ENCODE measurements at regions of chr22 and their contacts with region 1.

Region 1: GRCh38 chr22:46563381-46564083 is 26.1 kb upstream of the CELSR1 start:
- DNase-seq: no peak
- H3K4me3 ChIP-seq: no peak overlapping the region
- H3K27ac ChIP-seq: peak overlapping the region in 1 of 4 donors; percentile 20
- H3K4me1 ChIP-seq: peaks cover 12 to 14% (median 13%) of the 10 kb centered on the region in 4 donors
- H3K27me3 ChIP-seq: no peaks in the 10 kb centered on the region
- CTCF ChIP-seq: peak; percentile 70 to 73 (median 72)
- EP300 ChIP-seq: no peak
- POLR2A ChIP-seq: no peak

Region 2: GRCh38 chr22:46309526-46310085 is 253.9 kb before region 1 on chr22:
- intact Hi-C with region 1: no loop called
- DNase-seq: no peak
- H3K4me3 ChIP-seq: no peak overlapping the region
- H3K27ac ChIP-seq: no peak overlapping the region
- H3K4me1 ChIP-seq: no peaks in the 10 kb centered on the region
- H3K27me3 ChIP-seq: no peaks in the 10 kb centered on the region
- CTCF ChIP-seq: no peak
- EP300 ChIP-seq: no peak
- POLR2A ChIP-seq: no peak

Region 3: GRCh38 chr22:46604306-46604690 is 40.8 kb after region 1 on chr22:
- intact Hi-C with region 1: no loop called
- DNase-seq: no peak
- H3K4me3 ChIP-seq: no peak overlapping the region
- H3K27ac ChIP-seq: peak overlapping the region in 2 of 4 donors; percentile 30 to 48
- H3K4me1 ChIP-seq: peaks cover 0 to 10% (median 7%) of the 10 kb centered on the region in 4 donors
- H3K27me3 ChIP-seq: no peaks in the 10 kb centered on the region
- CTCF ChIP-seq: no peak
- EP300 ChIP-seq: no peak
- POLR2A ChIP-seq: no peak

Region 4: DNA sequence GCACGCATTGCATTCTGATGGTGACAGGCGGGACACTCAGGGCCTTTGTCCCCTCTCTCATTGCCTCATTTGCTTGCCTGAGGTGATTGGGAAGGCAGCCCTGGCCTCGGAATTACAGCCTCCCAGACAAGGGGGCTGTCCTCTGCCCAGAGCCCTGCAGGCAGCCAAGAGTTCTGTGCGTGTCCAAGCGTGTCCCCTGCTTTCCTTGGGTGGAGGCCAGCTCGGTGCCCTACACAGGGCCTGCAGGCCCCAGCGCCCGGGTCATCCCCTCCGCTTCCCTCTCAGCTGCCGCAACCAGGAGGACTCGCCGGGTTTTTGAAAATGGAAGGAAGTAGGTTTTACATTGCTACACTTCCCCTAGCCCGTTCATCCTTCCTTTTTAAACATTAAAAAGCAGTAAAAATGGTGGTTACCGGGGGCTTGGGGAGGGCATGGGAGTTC is 58.6 kb after region 1 on chr22:
- intact Hi-C with region 1: no loop called
- DNase-seq: no peak
- H3K4me3 ChIP-seq: no peak overlapping the region
- H3K27ac ChIP-seq: peak overlapping the region in 1 of 4 donors; percentile 22
- H3K4me1 ChIP-seq: peaks cover 46 to 59% (median 47%) of the 10 kb centered on the region in 4 donors
- H3K27me3 ChIP-seq: no peaks in the 10 kb centered on the region
- CTCF ChIP-seq: no peak
- EP300 ChIP-seq: no peak
- POLR2A ChIP-seq: no peak

Region 5: GRCh38 chr22:46638601-46639431 is 75.3 kb after region 1 on chr22:
- intact Hi-C with region 1: no loop called
- DNase-seq: no peak
- H3K4me3 ChIP-seq: no peak overlapping the region
- H3K27ac ChIP-seq: no peak overlapping the region
- H3K4me1 ChIP-seq: peaks cover 28 to 56% (median 47%) of the 10 kb centered on the region in 4 donors
- H3K27me3 ChIP-seq: no peaks in the 10 kb centered on the region
- CTCF ChIP-seq: no peak
- EP300 ChIP-seq: no peak
- POLR2A ChIP-seq: no peak

Region 6: GRCh38 chr22:46649141-46650077 is 85.9 kb after region 1 on chr22:
- intact Hi-C with region 1: loop called (anchors 10 kb)
- DNase-seq: no peak
- H3K4me3 ChIP-seq: no peak overlapping the region
- H3K27ac ChIP-seq: peak overlapping the region; percentile 66 to 80 (median 70)
- H3K4me1 ChIP-seq: peaks cover 58 to 82% (median 69%) of the 10 kb centered on the region in 4 donors
- H3K27me3 ChIP-seq: no peaks in the 10 kb centered on the region
- CTCF ChIP-seq: no peak
- EP300 ChIP-seq: no peak
- POLR2A ChIP-seq: no peak

Measured in esophagus muscularis mucosa (tissue), 4 donors.